Activated naive CD8-positive, alpha-beta T cell treated with anti-CD3 and anti-CD28 coated beads, Interleukin-2, amount 10 ng/mL, durations not matched to agents 7 days and 5 days (primary cell): ENCODE measurements at regions of chr4 and their contacts with region 1.

Region 1: GRCh38 chr4:15655229-15656037 is at the start of gene FBXL5:
- DNase-seq: peak; percentile 95
- ATAC-seq: peak; percentile 82
- H3K4me3 Mint-ChIP-seq: peak within 1 kb of the TSS; percentile 99
- H3K27ac Mint-ChIP-seq: peak within 1 kb of the TSS; percentile 99
- H3K4me1 Mint-ChIP-seq: peaks cover 29% of the 10 kb centered on the region
- H3K27me3 Mint-ChIP-seq: no peaks in the 10 kb centered on the region
- total RNA-seq, gene FBXL5: 48.7 to 53.4 TPM

Region 2: GRCh38 chr4:15001869-15002658 is 653.4 kb before region 1 on chr4 and contains the start of gene CPEB2:
- POLR2A ChIA-PET with region 1: interaction called, 13 read pairs
- DNase-seq: peak; percentile 93
- ATAC-seq: peak; percentile 70
- H3K4me3 Mint-ChIP-seq: peak within 1 kb of the TSS; percentile 95
- H3K27ac Mint-ChIP-seq: peak within 1 kb of the TSS; percentile 95
- H3K4me1 Mint-ChIP-seq: peaks cover 15% of the 10 kb centered on the region
- H3K27me3 Mint-ChIP-seq: no peaks in the 10 kb centered on the region
- total RNA-seq, gene CPEB2: 14.7 to 15.0 TPM

Region 3: DNA sequence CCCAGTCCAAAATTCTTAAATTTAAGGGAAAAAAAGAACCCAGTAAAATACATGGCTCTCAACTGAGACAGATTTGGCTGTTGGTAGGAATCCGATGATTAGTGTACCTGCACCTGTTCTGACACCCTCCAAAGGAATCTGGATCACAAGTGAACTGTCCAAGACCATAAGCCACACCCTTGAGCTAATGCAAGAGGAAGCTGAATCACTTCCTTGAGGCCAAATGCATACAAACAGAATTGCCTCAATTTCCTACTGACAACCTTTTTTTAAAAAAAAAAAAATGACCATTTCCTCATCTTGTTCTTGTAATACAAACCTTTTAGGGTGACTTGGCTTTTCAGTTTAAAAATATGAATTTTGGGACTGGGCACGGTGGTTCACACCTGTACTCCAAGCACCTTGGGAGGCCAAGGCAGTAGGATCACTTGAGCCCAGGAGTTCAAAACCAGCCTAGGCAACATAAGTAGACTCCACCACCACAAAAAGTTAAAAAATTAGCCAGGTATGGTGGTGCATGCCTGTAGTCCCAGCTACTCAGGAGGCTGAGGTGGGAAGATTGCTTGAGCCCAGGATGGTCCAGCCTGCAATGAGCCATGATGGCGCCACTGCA is 10.4 kb after region 1 on chr4:
- POLR2A ChIA-PET with region 1: interaction called, 17 read pairs
- DNase-seq: no peak
- ATAC-seq: peak; percentile 54
- H3K4me3 Mint-ChIP-seq: peak overlapping the region; percentile 18
- H3K27ac Mint-ChIP-seq: peak overlapping the region; percentile 63
- H3K4me1 Mint-ChIP-seq: peaks cover 19% of the 10 kb centered on the region
- H3K27me3 Mint-ChIP-seq: no peaks in the 10 kb centered on the region

Region 4: GRCh38 chr4:15681207-15682015 is 26.0 kb after region 1 on chr4 and contains the start of gene FAM200B:
- POLR2A ChIA-PET with region 1: interaction called, 39 read pairs
- DNase-seq: peak; percentile 99
- ATAC-seq: peak; percentile 96
- H3K4me3 Mint-ChIP-seq: peak within 1 kb of the TSS; percentile 97
- H3K27ac Mint-ChIP-seq: peak within 1 kb of the TSS; percentile 96
- H3K4me1 Mint-ChIP-seq: peaks cover 36% of the 10 kb centered on the region
- H3K27me3 Mint-ChIP-seq: no peaks in the 10 kb centered on the region
- total RNA-seq, gene FAM200B: 19.5 to 22.4 TPM

Region 5: DNA sequence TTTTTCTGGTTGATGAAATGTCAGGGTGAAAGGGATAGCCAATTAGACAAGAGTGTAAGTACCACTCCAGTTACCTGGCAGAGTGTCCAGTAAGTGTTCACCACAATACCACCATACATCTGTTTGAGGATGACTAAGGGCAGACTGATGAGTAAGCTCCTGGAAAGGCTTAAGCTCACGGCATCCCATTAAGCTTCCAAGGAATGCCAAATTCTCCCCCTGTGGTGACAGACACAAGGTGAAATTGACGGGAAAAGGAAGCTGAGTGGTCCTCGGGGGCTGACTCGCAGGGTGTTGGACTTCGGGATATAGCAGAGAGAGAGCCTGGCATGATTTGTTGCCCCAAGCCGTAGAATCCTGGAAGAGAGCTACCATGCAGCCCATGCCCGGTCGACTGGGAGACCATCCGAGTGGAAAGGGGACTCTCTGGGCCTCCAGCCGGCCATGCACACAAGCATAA is 39.8 kb after region 1 on chr4:
- POLR2A ChIA-PET with region 1: no interaction called
- DNase-seq: no peak
- ATAC-seq: no peak
- H3K4me3 Mint-ChIP-seq: no peak overlapping the region
- H3K27ac Mint-ChIP-seq: no peak overlapping the region
- H3K4me1 Mint-ChIP-seq: peaks cover 5% of the 10 kb centered on the region
- H3K27me3 Mint-ChIP-seq: peaks cover 19% of the 10 kb centered on the region